Right cardiac atrium (tissue), 5 donors: ENCODE measurements at regions of chr7 and their contacts with region 1.

Region 1: DNA sequence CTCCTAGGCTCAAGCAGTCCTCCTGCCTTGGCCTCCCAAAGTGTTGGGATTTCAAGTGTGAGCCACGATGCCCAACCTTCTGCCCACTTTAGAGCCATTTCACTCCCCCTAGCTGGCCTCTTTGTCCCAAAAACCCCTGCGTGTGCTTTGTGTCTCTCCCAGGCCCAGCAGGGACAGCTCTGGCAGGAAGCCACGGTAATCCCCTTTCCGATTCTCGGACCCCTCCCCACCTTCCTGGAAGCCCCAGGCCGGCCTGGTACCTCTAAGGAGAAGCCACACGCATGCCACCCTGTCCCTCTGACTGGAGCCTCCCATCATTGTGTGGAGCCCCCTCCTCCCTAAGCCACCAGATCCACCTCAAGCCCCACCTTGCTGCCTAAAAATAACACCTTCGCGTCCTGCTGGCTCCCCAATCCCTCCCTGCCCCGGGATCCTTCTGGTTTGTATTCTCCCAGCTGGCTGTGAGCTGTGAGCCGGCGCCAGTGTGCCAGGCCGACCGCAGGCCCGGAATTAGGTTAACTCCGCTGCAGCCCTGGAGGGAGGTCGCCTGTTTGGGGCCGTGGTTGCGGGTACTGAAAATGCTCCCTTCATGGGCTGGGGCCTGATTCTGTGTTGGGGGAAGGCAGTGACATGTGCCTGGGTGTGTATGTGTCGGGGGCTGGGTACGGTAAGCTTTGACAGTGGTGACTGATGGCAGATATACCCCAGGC is 16.4 kb upstream of the SRRM3 start:
- DNase-seq: no peak
- ATAC-seq: no peak
- H3K4me3 ChIP-seq: no peak overlapping the region
- H3K27ac ChIP-seq: no peak overlapping the region
- H3K4me1 ChIP-seq: no peaks in the 10 kb centered on the region
- H3K27me3 ChIP-seq: no peaks in the 10 kb centered on the region

Region 2: GRCh38 chr7:75565132-75565837 is 620.1 kb before region 1 on chr7:
- intact Hi-C with region 1: no loop called
- DNase-seq: peak in 1 of 3 donors; percentile 23
- ATAC-seq: peak; percentile 68 to 88
- H3K4me3 ChIP-seq: no peak overlapping the region
- H3K27ac ChIP-seq: peak overlapping the region; percentile 84
- H3K4me1 ChIP-seq: peaks cover 3% of the 10 kb centered on the region
- H3K27me3 ChIP-seq: no peaks in the 10 kb centered on the region

Region 3: GRCh38 chr7:75789361-75789924 is 395.9 kb before region 1 on chr7:
- intact Hi-C with region 1: no loop called
- DNase-seq: no peak
- ATAC-seq: no peak
- H3K4me3 ChIP-seq: no peak overlapping the region
- H3K27ac ChIP-seq: peak overlapping the region; percentile 29
- H3K4me1 ChIP-seq: peaks cover 2% of the 10 kb centered on the region
- H3K27me3 ChIP-seq: no peaks in the 10 kb centered on the region

Region 4: GRCh38 chr7:75842836-75843446 is 342.4 kb before region 1 on chr7:
- intact Hi-C with region 1: no loop called
- DNase-seq: no peak
- ATAC-seq: peak; percentile 70 to 78
- H3K4me3 ChIP-seq: no peak overlapping the region
- H3K27ac ChIP-seq: peak overlapping the region; percentile 86
- H3K4me1 ChIP-seq: peaks cover 5% of the 10 kb centered on the region
- H3K27me3 ChIP-seq: no peaks in the 10 kb centered on the region

Region 5: GRCh38 chr7:76262683-76263402 is 77.5 kb after region 1 on chr7:
- intact Hi-C with region 1: loop called in 1 of 4 experiments (anchors 10 kb)
- DNase-seq: peak; percentile 56 to 71 (median 68)
- ATAC-seq: peak; percentile 69 to 73
- H3K4me3 ChIP-seq: no peak overlapping the region
- H3K27ac ChIP-seq: no peak overlapping the region
- H3K4me1 ChIP-seq: peaks cover under 1% of the 10 kb centered on the region
- H3K27me3 ChIP-seq: no peaks in the 10 kb centered on the region

Region 6: DNA sequence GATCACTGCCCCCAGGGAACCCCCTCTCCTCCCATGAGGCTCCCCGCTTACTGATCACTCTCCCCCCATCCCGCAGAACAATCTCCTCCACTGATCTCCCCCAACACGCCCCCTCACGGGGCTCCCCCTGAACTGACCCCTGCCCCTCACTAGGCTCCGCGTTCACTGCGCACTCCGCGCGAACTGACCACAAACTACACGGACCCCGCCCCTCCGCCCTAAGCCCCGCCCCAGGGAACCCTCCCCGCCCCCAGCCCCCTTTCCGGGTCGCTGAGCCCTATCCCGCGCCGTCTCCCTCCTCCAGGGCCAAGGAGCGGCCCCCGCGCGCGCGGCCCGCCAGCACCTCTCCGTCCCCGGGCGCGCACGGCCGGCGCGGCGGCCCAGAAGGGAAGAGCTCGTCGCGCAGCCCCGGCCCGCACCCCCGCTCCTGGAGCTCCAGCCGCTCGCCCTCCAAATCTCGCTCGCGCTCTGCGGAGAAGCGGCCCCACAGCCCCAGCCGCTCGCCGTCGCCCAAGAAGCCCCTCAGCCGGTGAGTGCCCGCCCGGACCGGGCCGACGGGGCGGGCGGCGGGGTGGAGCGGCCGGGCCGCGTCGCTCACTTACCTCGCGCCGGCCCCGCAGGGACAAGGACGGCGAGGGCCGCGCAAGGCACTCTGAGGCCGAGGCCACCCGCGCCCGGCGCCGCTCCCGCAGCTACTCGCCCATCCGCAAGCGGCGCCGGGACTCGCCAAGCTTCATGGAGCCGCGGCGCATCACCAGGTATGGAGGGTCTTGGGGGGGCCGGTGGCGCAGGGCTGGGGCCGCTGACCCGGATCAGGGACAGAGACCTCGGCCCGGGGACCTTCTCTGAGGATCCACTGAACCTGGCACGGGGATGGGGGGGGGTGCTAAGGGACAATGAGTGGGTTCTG is 97.3 kb after region 1 on chr7:
- intact Hi-C with region 1: loop called in 1 of 4 experiments (anchors 10 kb)
- DNase-seq: peak; percentile 64 to 82 (median 82)
- ATAC-seq: peak; percentile 70 to 72
- H3K4me3 ChIP-seq: peak overlapping the region; percentile 61
- H3K27ac ChIP-seq: no peak overlapping the region
- H3K4me1 ChIP-seq: no peaks in the 10 kb centered on the region
- H3K27me3 ChIP-seq: no peaks in the 10 kb centered on the region